Heart left ventricle (tissue), 16 donors: ENCODE measurements at regions of chr21 and their contacts with region 1.

Region 1: DNA sequence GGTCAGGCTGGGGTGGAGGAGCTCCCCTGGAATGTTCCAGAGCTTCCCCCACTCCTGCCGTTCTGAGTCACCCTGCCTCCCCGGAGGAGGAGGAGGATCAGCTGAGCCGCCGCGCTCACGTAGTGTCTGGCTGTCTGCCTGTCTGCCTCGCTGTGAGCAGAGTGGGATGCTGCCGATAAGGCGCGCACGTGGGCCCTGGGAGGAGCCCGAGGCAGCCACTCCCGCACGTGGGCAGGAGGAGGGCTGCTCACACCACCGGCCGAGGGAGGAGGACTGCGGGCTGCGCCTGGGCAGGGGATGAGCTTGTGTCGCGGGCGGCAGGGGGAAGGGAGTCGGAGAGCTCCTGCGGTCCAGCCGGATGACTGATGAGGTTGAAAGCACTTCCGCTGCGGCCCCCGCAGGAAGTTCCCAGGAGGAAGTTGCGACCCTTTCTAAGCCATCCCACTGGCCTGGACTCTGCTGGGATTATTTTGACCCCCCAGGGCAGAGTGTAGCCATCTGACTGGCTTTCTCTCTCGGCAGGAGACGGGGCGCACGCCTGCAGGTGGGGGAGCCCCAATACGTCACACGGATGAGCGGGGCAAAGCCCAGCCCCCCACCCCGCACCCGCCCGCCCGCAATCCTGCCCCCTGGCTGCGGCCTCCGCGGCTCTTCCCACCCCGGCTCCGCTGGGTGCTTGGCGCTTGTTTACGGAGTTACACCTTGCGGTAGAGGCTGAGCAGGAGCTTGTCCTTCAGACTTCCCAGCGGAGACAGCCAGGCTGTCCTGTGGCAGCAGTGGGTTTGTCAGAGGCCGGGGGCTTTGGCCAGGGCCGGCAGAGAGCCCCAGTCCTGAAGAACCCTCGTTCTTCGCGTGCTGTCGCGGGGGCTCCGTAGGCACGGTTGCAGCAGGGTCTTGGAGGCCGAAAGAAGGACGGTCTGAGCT is 9.8 kb downstream of the PDXK start:
- DNase-seq: peak; percentile 95 to 98 (median 96)
- ATAC-seq: peak; percentile 88 to 92 (median 91)
- H3K4me3 ChIP-seq: peak overlapping the region; percentile 50 to 78 (median 64)
- H3K27ac ChIP-seq: peak overlapping the region; percentile 79 to 96 (median 92)
- H3K4me1 ChIP-seq: peaks cover 10 to 80% (median 53%) of the 10 kb centered on the region in 12 donors
- H3K27me3 ChIP-seq: no peaks in the 10 kb centered on the region
- CTCF ChIP-seq: peak; percentile 16 to 65 (median 48)
- POLR2A ChIP-seq: peak in 1 of 2 donors; percentile 73

Region 2: GRCh38 chr21:43659136-43660000 is 69.4 kb before region 1 on chr21 and contains the starts of genes HSF2BP and RRP1B:
- intact Hi-C with region 1: loop called in 3 of 10 experiments (anchors 5 to 10 kb)
- DNase-seq: peak; percentile 82 to 91 (median 87)
- ATAC-seq: peak; percentile 72 to 97 (median 92)
- H3K4me3 ChIP-seq: peak within 1 kb of the TSS; percentile 69 to 100 (median 93)
- H3K27ac ChIP-seq: peak within 1 kb of the TSS; percentile 28 to 92 (median 84)
- H3K4me1 ChIP-seq: peaks cover 0 to 33% (median 21%) of the 10 kb centered on the region in 12 donors
- H3K27me3 ChIP-seq: no peaks in the 10 kb centered on the region
- CTCF ChIP-seq: peak in 4 of 12 donors; percentile 4 to 24 (median 10)
- POLR2A ChIP-seq: peak in 1 of 2 donors; percentile 77
- total RNA-seq, gene HSF2BP: 0.32 TPM in 1 of 9 donors, not detected in the others
- total RNA-seq, gene RRP1B: 6.6 to 16.1 (median 9.5) TPM

Region 3: DNA sequence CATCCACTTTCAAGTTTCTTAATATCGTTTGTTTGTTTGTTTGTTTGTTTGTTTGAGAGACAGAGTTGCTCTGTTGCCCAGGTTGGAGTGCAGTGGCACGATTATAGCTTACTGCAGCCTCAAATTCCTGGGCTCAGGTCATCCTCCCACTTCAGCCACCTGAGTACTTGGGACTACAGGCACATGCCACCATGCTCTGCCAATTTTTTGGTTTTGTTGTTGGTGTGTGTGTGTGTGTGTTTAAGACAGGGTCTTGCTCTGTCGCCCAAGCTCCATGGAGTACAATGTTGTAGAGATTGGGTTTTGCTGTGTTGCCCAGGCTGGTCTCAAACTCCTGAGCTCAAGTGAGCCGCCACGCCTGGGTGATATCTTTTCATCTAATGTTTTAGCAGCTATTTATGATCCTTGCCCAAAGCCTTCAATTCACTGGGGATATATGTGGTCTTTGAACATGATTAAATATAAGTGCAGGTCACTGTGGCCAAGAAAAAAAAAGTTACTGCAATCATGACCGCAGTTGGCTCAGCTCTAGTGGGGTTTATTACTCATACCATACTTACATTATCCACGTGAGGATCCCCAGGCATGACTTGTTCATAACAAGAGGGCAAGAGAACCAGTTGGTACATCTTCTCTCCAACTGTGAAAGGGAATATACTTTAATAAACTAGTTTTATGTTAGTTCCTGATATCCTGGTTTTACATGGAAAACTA is 61.4 kb before region 1 on chr21:
- intact Hi-C with region 1: loop called in 1 of 10 experiments (anchors 10 kb)
- DNase-seq: no peak
- ATAC-seq: no peak
- H3K4me3 ChIP-seq: no peak overlapping the region
- H3K27ac ChIP-seq: no peak overlapping the region
- H3K4me1 ChIP-seq: peaks cover 0 to 9% (median 0%) of the 10 kb centered on the region in 12 donors
- H3K27me3 ChIP-seq: no peaks in the 10 kb centered on the region
- CTCF ChIP-seq: no peak
- POLR2A ChIP-seq: no peak

Region 4: GRCh38 chr21:43687566-43688286 is 41.0 kb before region 1 on chr21:
- intact Hi-C with region 1: no loop called
- DNase-seq: peak in 2 of 5 donors; percentile 30 to 32
- ATAC-seq: peak in 3 of 4 donors; percentile 18 to 47 (median 23)
- H3K4me3 ChIP-seq: no peak overlapping the region
- H3K27ac ChIP-seq: peak overlapping the region in 2 of 12 donors; percentile 9 to 57
- H3K4me1 ChIP-seq: peaks cover 0 to 22% (median 0%) of the 10 kb centered on the region in 12 donors
- H3K27me3 ChIP-seq: no peaks in the 10 kb centered on the region
- CTCF ChIP-seq: no peak
- POLR2A ChIP-seq: no peak

Region 5: GRCh38 chr21:43775795-43776430 is 47.2 kb after region 1 on chr21 and contains the start of gene CSTB:
- intact Hi-C with region 1: loop called in 5 of 10 experiments (anchors 2 to 10 kb)
- DNase-seq: peak; percentile 88 to 92 (median 90)
- ATAC-seq: peak; percentile 36 to 87 (median 76)
- H3K4me3 ChIP-seq: peak within 1 kb of the TSS; percentile 69 to 99 (median 88)
- H3K27ac ChIP-seq: peak within 1 kb of the TSS; percentile 86 to 97 (median 92)
- H3K4me1 ChIP-seq: peaks cover 0 to 34% (median 15%) of the 10 kb centered on the region in 12 donors
- H3K27me3 ChIP-seq: no peaks in the 10 kb centered on the region
- CTCF ChIP-seq: peak in 1 of 12 donors; percentile 5
- POLR2A ChIP-seq: peak in 1 of 2 donors; percentile 61
- total RNA-seq, gene CSTB: 7.8 to 77.0 (median 35.9) TPM

Region 6: DNA sequence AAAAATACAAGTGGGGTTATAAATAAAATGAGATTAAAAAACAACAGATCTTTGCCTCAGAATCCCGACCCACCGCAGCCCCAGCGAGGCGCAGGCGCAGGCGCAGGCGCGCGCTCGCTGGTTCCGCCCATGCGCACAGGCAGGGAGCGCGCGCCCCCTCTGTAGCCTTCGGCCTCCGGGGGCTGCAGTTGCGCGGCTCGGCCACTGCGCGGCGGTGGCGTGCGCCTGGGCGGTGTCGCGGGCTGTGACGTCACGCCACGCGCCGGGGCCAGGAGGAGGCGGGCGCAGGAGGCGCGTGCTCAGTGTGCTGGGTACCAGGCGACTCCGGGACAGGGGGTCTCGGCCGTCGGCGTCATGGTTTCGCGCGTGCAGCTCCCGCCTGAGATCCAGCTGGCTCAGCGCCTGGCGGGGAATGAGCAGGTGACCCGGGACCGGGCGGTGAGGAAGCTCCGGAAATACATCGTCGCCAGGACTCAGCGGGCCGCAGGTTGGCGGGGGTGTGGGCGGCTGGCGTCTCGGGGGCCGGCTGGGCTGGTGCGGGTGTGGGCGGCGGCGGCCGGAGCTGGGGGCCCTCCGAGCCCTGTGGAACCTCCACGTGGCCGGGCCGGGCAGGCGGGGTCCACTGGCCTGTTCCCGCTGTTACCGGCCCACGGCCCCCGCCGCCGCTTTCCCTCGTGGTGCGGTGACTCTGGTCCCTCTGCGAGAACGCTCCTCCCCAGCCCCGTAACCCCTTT is 60.7 kb after region 1 on chr21 and contains the start of gene RRP1:
- intact Hi-C with region 1: loop called in 1 of 10 experiments (anchors 10 kb)
- DNase-seq: peak; percentile 89 to 97 (median 93)
- ATAC-seq: peak; percentile 83 to 96 (median 96)
- H3K4me3 ChIP-seq: peak within 1 kb of the TSS; percentile 75 to 97 (median 86)
- H3K27ac ChIP-seq: peak within 1 kb of the TSS in 11 of 12 donors; percentile 65 to 95 (median 89)
- H3K4me1 ChIP-seq: peaks cover 0 to 20% (median 13%) of the 10 kb centered on the region in 12 donors
- H3K27me3 ChIP-seq: no peaks in the 10 kb centered on the region
- CTCF ChIP-seq: peak; percentile 95 to 100 (median 100)
- POLR2A ChIP-seq: peak in 1 of 2 donors; percentile 90
- total RNA-seq, gene RRP1: 6.0 to 15.6 (median 9.8) TPM

Region 7: DNA sequence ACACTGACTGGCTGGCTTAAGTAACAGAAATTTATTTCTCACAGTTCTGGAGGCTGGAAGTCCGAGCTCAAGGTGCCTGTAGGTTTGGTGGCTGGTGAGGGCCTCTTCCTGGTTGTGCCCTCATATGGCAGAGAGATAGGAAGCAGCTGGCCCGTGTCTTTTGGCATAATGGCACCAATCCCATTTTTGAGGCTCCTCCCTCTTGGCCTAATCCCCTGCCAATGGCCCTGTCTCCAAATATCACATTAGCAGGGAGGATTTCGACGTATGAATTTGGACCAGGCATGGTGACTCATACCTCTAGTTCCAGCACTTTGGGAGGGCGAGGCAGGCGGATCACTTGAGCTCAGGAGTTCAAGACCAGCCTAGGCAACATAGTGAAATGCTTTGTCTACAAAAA is 173.7 kb after region 1 on chr21:
- intact Hi-C with region 1: loop called in 1 of 10 experiments (anchors 10 kb)
- DNase-seq: peak in 1 of 5 donors; percentile 66
- ATAC-seq: peak; percentile 49 to 67 (median 60)
- H3K4me3 ChIP-seq: no peak overlapping the region
- H3K27ac ChIP-seq: peak overlapping the region in 10 of 12 donors; percentile 20 to 89 (median 80)
- H3K4me1 ChIP-seq: peaks cover 3 to 25% (median 15%) of the 10 kb centered on the region in 12 donors
- H3K27me3 ChIP-seq: no peaks in the 10 kb centered on the region
- CTCF ChIP-seq: no peak
- POLR2A ChIP-seq: no peak

Region 8: GRCh38 chr21:45209046-45209445 is 1480.3 kb after region 1 on chr21:
- intact Hi-C with region 1: no loop called
- DNase-seq: no peak
- ATAC-seq: no peak
- H3K4me3 ChIP-seq: no peak overlapping the region
- H3K27ac ChIP-seq: no peak overlapping the region
- H3K4me1 ChIP-seq: peaks cover 0 to 12% (median 0%) of the 10 kb centered on the region in 12 donors
- H3K27me3 ChIP-seq: no peaks in the 10 kb centered on the region
- CTCF ChIP-seq: no peak
- POLR2A ChIP-seq: no peak